CD8-positive, alpha-beta T cell (primary cell): ENCODE measurements at regions of chr20 and their contacts with region 1.

Region 1: DNA sequence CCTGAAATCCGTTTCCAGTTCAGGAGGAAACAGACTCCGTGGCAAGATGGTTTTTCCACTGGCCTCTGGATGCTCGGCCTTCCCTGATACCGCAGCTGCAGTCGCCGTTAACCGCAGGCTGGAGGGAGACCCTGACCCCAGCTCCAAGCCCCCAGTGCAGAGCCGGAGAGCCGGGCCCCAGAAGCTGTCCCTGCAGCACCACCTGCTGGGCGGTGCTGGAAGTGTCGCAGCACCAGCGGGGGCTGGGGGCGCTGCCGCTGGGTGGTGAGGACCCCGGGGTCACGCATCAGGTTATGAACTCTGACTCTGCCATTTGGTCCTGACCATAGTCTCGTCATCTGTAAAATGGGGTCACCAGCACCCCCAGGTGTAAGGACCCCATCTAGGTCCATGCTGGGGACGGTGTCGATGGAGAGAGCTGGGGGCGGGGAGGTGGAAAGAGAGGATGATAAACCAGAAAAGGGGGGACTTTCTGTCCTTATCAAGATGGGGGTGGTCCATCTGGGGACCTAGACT is 20.7 kb upstream of the CHRNA4 start:
- DNase-seq: peak in 7 of 9 experiments; percentile 6 to 58 (median 46)
- ATAC-seq: peak; percentile 51
- H3K4me3 ChIP-seq: no peak overlapping the region
- H3K4me3 Mint-ChIP-seq: no peak overlapping the region
- H3K27ac ChIP-seq: no peak overlapping the region
- H3K27ac Mint-ChIP-seq: no peak overlapping the region
- H3K4me1 ChIP-seq: no peaks in the 10 kb centered on the region
- H3K4me1 Mint-ChIP-seq: peaks cover 3% of the 10 kb centered on the region
- H3K27me3 ChIP-seq: no peaks in the 10 kb centered on the region
- H3K27me3 Mint-ChIP-seq: peaks cover 14% of the 10 kb centered on the region
- CTCF ChIP-seq: peak; percentile 77

Region 2: DNA sequence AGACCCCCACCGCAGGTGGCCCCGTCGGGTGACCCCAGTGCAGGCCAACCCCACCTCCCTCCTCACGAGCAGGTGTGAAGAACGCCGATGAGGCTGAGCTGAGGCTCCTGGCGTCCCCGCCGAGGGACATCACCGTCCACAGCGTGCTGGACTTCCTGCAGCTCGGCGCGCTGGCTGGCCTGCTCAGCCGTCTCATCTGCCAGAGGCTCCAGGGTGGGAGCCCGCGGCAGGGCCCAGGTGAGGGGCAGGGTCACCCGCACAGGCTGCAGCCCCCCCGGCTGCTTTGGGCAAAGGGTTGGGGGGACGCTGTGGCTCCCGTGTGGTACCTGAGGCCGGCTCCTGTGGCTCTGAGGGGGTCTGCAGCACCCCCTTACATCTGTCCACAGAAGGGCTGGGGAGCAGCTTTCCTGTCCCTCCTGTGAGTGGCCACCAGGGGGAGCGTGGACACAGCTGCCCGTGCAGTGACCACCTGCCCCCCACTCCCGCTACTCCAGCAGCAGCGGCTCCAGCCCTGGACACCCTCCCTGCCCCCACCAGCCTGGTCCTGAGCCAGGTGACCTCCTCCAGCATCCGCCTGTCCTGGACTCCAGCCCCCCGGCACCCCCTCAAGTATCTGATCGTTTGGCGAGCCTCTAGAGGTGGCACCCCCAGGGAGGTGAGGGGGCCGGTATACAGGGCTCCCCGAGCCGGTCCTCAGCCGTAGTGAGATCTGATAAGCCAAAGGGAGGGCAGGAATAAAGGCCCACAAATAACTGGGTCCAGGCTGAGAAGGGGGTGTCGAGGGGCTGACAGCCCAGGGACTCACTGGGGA is 72.4 kb before region 1 on chr20:
- CTCF ChIA-PET with region 1: interaction called, 14 read pairs
- POLR2A ChIA-PET with region 1: no interaction called
- intact Hi-C with region 1: loop called in 1 of 2 experiments (anchors 2 kb)
- DNase-seq: peak in 4 of 9 experiments; percentile 35 to 52 (median 42)
- ATAC-seq: peak; percentile 36
- H3K4me3 ChIP-seq: no peak overlapping the region
- H3K4me3 Mint-ChIP-seq: no peak overlapping the region
- H3K27ac ChIP-seq: no peak overlapping the region
- H3K27ac Mint-ChIP-seq: no peak overlapping the region
- H3K4me1 ChIP-seq: no peaks in the 10 kb centered on the region
- H3K4me1 Mint-ChIP-seq: no peaks in the 10 kb centered on the region
- H3K27me3 ChIP-seq: no peaks in the 10 kb centered on the region
- H3K27me3 Mint-ChIP-seq: peaks cover 3% of the 10 kb centered on the region
- CTCF ChIP-seq: peak; percentile 75